Gastrocnemius medialis (tissue), 4 donors: ENCODE measurements at regions of chr4 and their contacts with region 1.

Region 1: DNA sequence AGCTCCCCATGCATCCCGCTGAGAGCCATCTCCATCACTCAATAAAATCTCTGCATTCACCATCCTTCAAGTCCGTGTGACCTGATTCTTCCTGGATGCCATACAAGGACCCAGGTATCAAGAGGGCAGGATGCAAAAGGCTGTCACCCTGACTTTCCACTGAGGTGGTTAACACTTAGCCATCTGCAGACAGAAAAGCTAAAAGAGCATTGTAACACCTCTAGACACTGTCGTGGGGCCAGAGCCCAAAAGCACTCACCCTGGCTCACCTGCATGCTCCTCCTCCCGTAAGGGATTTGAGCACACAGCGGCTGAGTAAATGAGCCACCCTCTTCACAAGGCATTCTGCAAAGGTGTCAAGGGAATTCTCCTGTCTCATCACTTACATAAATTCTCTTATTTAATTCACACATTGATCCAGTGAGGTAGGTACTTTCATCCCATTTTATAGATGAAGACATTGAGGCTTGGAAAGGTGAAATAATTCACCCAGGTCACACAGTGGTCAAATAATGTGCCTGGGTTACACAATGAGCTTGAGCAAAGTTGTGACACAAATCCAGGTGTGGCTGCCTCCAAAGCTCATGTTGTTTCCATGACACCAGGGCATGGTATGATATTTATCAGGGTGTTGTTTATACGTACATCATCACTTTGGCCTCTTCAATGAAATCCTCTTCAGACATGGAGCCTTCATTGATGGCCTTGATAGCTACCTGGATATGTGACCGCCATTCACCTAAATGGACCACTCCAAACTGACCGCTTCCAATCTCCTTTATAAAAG is 48.0 kb downstream of the TXK start:
- DNase-seq: no peak
- ATAC-seq: no peak
- H3K4me3 ChIP-seq: no peak overlapping the region
- H3K27ac ChIP-seq: no peak overlapping the region
- H3K4me1 ChIP-seq: no peaks in the 10 kb centered on the region
- H3K27me3 ChIP-seq: no peaks in the 10 kb centered on the region
- CTCF ChIP-seq: no peak
- POLR2A ChIP-seq: no peak

Region 2: DNA sequence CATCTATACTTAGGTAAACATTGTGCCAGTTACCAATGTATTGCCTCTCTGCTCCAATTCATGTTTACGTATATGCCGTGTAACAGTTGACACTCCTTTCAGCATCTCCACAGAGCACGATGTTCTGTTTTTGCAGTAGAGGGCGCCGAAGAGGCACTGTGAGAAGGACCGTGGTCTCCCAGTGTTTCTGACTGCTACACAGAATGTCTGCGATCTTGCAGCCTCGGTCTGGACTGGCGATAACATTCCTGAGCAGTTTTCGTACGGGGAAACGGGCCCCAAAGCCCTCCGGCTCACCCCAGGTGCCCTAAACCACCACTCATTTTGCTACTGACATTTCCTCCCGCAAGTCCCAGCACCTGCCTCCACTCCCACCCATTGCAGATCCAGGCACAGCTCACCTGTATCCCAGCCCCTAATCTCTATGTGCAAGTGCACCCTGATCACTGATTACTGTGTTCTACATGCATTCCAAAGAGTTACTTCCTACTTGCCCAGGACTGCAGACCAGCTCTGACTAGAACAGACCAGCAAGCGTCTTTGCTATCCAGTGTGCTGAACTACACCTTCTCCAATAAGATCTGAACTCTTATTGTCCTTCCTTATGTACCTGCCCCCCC is 159.3 kb before region 1 on chr4:
- in situ Hi-C with region 1: loop called in 1 of 4 experiments (anchors 10 kb)
- intact Hi-C with region 1: loop called (anchors 2 kb)
- DNase-seq: no peak
- ATAC-seq: peak in 1 of 2 donors; percentile 72
- H3K4me3 ChIP-seq: peak overlapping the region in 1 of 4 donors; percentile 39
- H3K27ac ChIP-seq: no peak overlapping the region
- H3K4me1 ChIP-seq: no peaks in the 10 kb centered on the region
- H3K27me3 ChIP-seq: no peaks in the 10 kb centered on the region
- CTCF ChIP-seq: peak in 3 of 5 experiments; percentile 21 to 59 (median 42)
- POLR2A ChIP-seq: no peak

Region 3: GRCh38 chr4:48002267-48002666 is 83.7 kb before region 1 on chr4:
- in situ Hi-C with region 1: loop called in 3 of 4 experiments (anchors 5 to 10 kb)
- intact Hi-C with region 1: loop called (anchors 2 kb)
- DNase-seq: no peak
- ATAC-seq: no peak
- H3K4me3 ChIP-seq: no peak overlapping the region
- H3K27ac ChIP-seq: no peak overlapping the region
- H3K4me1 ChIP-seq: no peaks in the 10 kb centered on the region
- H3K27me3 ChIP-seq: no peaks in the 10 kb centered on the region
- CTCF ChIP-seq: no peak
- POLR2A ChIP-seq: no peak

Region 4: DNA sequence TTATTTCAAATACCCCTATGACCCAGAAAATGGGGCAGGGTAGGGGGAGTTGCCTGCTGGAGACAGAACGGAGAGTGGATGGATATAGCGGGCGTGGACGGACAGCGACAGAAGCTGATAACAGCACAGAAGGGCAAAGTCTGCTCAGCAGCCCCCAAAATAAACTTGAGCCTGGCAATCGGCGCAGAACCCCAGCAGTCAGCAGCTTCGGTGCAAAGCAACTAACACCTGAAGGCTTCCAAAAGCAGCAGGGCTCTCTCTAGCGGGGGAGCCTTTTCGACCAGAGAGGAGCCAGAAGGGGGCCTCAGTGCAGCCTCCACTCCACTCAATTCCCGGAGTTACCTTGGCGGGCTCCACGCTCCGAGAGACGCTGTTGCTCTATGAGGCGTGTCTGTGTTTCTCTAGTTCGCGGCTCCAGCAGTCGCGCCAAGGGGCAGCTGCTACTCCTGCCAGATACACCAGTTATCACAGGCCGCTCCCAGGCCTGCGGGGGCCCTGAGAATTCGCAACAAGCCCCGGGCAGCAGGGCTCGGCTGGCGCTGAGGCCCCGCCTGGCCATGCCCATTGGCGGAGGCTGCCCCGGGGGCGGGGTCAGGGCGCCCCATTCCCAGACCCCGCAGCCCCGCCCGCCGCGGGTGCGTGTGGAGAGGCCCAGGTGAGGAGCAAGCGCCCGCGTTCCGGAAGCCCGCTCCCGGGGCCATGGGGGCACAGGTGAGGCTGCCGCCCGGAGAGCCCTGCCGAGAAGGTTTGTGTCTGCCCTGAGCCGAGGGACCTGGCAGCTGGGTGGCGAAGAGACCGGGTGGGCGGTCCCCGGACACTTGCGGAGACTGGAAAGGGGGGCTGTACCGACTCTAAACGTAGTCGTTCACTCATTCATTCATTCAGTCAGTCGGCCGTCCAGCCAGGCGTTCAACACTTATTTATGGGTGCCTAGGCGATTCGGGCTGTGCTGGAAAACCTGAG is 69.6 kb before region 1 on chr4 and contains the starts of genes CNGA1 and NIPAL1:
- in situ Hi-C with region 1: no loop called
- intact Hi-C with region 1: loop called (anchors 5 kb)
- DNase-seq: peak; percentile 45 to 68
- ATAC-seq: peak; percentile 89 to 93
- H3K4me3 ChIP-seq: peak within 1 kb of the TSS; percentile 72 to 81 (median 76)
- H3K27ac ChIP-seq: peak within 1 kb of the TSS; percentile 62 to 78 (median 74)
- H3K4me1 ChIP-seq: peaks cover 0 to 4% of the 10 kb centered on the region in 2 donors
- H3K27me3 ChIP-seq: no peaks in the 10 kb centered on the region
- CTCF ChIP-seq: peak in 2 of 5 experiments; percentile 41 to 55
- POLR2A ChIP-seq: peak in 1 of 2 donors; percentile 23
- total RNA-seq, gene CNGA1: 0.15 to 0.53 (median 0.32) TPM in 3 of 4 donors, not detected in the other
- total RNA-seq, gene NIPAL1: 0.07 to 0.51 (median 0.15) TPM in 3 of 4 donors, not detected in the other